Breast epithelium (tissue), 4 donors: ENCODE measurements at regions of chr2 and their contacts with region 1.

Region 1: DNA sequence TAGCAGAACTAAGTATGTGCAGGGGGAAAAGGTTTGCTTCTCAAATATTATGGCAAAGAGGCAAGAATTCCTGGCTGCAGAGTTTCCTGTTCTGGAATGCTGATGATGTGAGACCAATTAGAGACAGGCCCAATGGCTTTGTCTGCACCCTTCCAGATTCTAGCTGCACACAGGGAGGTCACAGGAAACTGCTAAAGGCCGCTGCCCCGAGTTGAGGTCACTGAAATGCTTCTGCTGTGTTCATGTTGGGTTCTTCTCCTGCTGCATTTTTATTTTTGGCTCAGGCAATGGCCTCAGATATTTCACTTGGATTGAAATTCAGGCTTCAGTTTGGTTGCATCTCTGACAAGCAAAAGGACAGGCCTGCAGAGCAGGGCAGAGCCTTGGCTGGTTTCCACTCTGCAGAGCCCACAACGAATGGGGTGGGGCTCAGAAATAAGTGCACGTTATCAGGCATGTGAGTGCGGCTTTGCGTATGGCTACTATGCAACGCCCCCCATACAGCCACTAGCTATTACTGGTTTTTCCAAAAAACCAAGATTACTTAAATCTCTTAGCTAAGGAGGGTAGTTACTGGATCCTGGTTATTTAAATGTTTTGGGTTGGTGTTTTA is 66.9 kb upstream of the FZD5 start:
- DNase-seq: no peak
- H3K4me3 ChIP-seq: no peak overlapping the region
- H3K27ac ChIP-seq: no peak overlapping the region
- H3K4me1 ChIP-seq: no peaks in the 10 kb centered on the region
- H3K27me3 ChIP-seq: no peaks in the 10 kb centered on the region
- CTCF ChIP-seq: no peak
- POLR2A ChIP-seq: no peak

Region 2: DNA sequence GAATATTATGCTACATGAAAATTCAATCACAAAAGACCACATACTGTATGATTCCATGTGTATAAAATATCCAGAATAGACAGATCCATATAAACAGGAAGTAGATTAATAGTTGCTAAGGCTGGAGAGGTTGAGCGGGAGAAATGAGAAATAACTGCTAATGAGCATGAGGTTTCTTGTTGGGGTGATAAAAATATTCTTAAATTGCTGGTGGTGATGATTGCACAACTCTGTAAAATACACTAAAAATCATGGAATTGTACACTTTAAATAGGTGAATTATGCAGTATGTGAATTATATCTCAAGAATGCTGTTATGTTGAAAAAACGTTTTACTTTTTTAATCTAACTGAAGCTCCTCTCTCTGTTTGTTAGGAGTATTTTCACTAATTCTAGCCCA is 408.6 kb before region 1 on chr2:
- intact Hi-C with region 1: loop called (anchors 5 kb)
- DNase-seq: no peak
- H3K4me3 ChIP-seq: no peak overlapping the region
- H3K27ac ChIP-seq: no peak overlapping the region
- H3K4me1 ChIP-seq: no peaks in the 10 kb centered on the region
- H3K27me3 ChIP-seq: no peaks in the 10 kb centered on the region
- CTCF ChIP-seq: no peak
- POLR2A ChIP-seq: no peak